Stomach (tissue), 19 donors: ENCODE measurements at regions of chr14 and their contacts with region 1.

Region 1: DNA sequence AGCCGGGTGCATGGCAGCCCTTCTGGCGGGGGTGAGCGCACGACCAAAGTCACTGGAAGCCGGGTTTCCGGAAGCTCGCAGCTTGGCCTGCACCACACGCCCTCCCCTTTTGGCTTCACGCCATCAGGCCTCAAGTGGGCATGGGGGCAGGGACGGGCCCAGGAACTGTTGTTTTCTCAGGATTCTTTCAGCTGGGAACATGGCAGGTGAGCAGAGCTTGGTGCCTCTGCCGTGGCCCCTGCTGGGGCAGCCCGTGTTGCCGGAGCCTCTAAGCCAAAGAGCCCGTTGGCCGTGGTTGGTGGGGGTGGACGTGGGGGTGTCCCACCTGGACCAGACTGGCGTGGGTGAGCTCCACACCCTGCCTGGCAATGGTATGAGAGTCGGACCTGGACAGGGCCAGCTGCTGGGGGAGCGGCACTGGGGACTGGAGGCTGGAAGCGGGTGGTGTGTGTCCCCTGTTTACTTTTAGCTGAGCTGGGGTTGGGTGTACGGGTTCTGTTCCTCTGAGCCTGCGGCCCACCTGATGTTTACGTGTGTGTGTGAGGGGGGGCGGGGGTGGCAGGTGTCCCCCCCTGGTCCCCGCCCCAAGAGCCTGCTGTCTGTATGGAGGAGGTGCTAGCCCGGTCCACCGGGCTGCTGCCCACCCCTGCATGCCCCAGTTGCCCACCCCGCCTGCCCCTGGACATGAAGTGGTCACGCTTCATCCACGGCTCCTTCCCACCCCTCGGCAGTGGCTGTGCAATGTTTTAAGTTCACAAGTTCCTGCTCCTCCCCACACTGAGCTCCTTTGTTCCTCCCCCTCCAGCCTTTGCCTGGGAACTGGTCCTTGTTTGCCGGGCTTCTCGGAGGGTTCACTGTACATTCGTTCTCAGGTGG is 28.7 kb upstream of the PLD4 start:
- DNase-seq: peak; percentile 70 to 90
- H3K4me3 ChIP-seq: no peak overlapping the region
- H3K27ac ChIP-seq: peak overlapping the region; percentile 1 to 64 (median 42)
- H3K4me1 ChIP-seq: peaks cover 22 to 31% (median 28%) of the 10 kb centered on the region in 4 donors
- H3K27me3 ChIP-seq: no peaks in the 10 kb centered on the region
- CTCF ChIP-seq: no peak
- EP300 ChIP-seq: no peak
- POLR2A ChIP-seq: no peak

Region 2: GRCh38 chr14:104708606-104709268 is 187.3 kb before region 1 on chr14:
- intact Hi-C with region 1: no loop called
- DNase-seq: peak; percentile 81 to 89
- H3K4me3 ChIP-seq: no peak overlapping the region
- H3K27ac ChIP-seq: no peak overlapping the region
- H3K4me1 ChIP-seq: peaks cover 4 to 24% (median 16%) of the 10 kb centered on the region in 4 donors
- H3K27me3 ChIP-seq: no peaks in the 10 kb centered on the region
- CTCF ChIP-seq: peak in 6 of 7 experiments; percentile 64 to 99 (median 98)
- EP300 ChIP-seq: no peak
- POLR2A ChIP-seq: no peak

Region 3: GRCh38 chr14:105045710-105046326 is 149.8 kb after region 1 on chr14:
- intact Hi-C with region 1: loop called (anchors 10 kb)
- DNase-seq: peak; percentile 95 to 96
- H3K4me3 ChIP-seq: no peak overlapping the region
- H3K27ac ChIP-seq: no peak overlapping the region
- H3K4me1 ChIP-seq: peaks cover 0 to 17% (median 12%) of the 10 kb centered on the region in 4 donors
- H3K27me3 ChIP-seq: peaks cover 0 to 5% (median 0%) of the 10 kb centered on the region in 3 donors
- CTCF ChIP-seq: peak in 5 of 7 experiments; percentile 99 to 100 (median 100)
- EP300 ChIP-seq: no peak
- POLR2A ChIP-seq: no peak